ENCODE measurements at regions of chr19 and their contacts with region 1.

Region 1: GRCh38 chr19:50724522-50725217 is 1.5 kb downstream of the CLEC11A start:
- H3K4me3 ChIP-seq: peak overlapping the region; percentile 78
- H3K27ac ChIP-seq: peak overlapping the region; percentile 77
- H3K4me1 ChIP-seq: peaks cover 7% of the 10 kb centered on the region; the same call in 1 of the 2 replicates
- CTCF ChIP-seq: peak; percentile 100

Region 2: GRCh38 chr19:49786376-49786820 is 938.3 kb before region 1 on chr19:
- CTCF ChIA-PET with region 1: no interaction called
- POLR2A ChIA-PET with region 1: no interaction called
- H3K4me3 ChIP-seq: no peak overlapping the region
- H3K27ac ChIP-seq: 0 out of 2 replicates have a peak overlapping the region, but pooled peaks have one; percentile 16
- H3K4me1 ChIP-seq: no peaks in the 10 kb centered on the region
- CTCF ChIP-seq: no peak

Region 3: GRCh38 chr19:50639121-50640112 is 85.3 kb before region 1 on chr19 and contains the start of gene SYT3:
- CTCF ChIA-PET with region 1: no interaction called
- POLR2A ChIA-PET with region 1: interaction called, 11 read pairs
- H3K4me3 ChIP-seq: peak within 1 kb of the TSS; percentile 65
- H3K27ac ChIP-seq: peak within 1 kb of the TSS; percentile 34; the same call in 1 of the 2 replicates
- H3K4me1 ChIP-seq: no peaks in the 10 kb centered on the region
- CTCF ChIP-seq: no peak

Region 4: DNA sequence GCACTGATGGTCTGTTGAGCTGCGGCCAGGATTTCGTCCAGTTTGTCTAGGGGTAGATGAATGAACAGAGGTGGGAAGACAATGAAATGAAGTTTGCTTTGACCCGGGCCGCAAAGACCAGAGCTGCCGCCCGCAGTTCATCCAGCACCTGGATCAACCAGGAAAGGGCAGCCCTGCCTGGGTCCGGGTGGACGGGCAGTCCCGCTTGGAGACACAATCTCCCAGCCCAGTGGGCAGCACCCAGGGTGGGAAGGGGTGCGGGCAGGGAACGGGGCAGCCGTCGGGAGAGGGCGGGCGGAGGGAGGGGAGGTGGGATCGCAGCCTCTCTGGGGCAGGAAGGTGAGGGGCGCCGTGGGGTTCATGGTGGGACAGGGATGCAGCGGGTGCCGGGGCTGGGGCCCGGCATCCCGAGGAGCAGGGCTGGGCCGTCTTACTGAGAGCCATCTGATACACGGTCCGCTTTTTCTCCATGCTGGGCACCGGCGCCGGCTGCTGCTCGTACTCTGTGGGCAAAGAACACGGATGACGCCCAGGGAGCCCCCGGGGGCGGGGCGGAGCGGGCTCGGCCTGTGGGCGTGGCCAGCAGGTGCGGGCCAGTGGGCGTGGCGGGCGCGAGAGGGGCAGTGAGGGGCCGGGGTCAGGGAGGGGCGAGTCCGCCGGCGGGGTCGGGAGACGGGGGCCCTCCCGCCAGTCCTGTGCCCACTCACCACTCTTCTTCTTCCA is 38.2 kb before region 1 on chr19:
- CTCF ChIA-PET with region 1: no interaction called
- POLR2A ChIA-PET with region 1: no interaction called
- H3K4me3 ChIP-seq: no peak overlapping the region
- H3K27ac ChIP-seq: no peak overlapping the region
- H3K4me1 ChIP-seq: no peaks in the 10 kb centered on the region
- CTCF ChIP-seq: no peak

Region 5: DNA sequence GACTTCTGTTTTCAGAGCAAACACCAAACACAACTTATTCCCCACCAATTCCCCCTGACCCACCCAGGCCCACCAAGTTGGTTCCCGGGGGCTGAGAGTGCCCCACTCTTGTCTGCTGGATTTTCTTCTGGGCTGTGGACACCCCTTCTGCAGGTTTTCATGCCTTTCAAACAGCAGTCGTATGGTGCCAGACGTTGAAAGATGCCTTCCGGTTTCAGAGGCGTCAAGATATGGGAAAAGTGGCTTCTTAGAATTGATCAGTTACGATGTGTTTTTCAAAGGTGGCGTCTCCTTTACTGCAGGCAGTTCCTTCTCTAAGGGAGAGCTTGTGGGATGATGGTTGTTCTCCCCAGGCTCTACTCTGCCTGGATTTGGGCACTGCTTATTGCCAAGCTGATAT is 11.2 kb after region 1 on chr19:
- CTCF ChIA-PET with region 1: interaction called, 26 read pairs
- POLR2A ChIA-PET with region 1: interaction called, 12 read pairs
- H3K4me3 ChIP-seq: no peak overlapping the region
- H3K27ac ChIP-seq: no peak overlapping the region
- H3K4me1 ChIP-seq: no peaks in the 10 kb centered on the region
- CTCF ChIP-seq: no peak

Region 6: GRCh38 chr19:50745221-50745620 is 20.6 kb after region 1 on chr19:
- CTCF ChIA-PET with region 1: interaction called, 11 read pairs
- POLR2A ChIA-PET with region 1: interaction called, 3 read pairs
- H3K4me3 ChIP-seq: no peak overlapping the region
- H3K27ac ChIP-seq: no peak overlapping the region
- H3K4me1 ChIP-seq: no peaks in the 10 kb centered on the region
- CTCF ChIP-seq: no peak

Region 7: GRCh38 chr19:50858896-50859295 is 134.2 kb after region 1 on chr19:
- CTCF ChIA-PET with region 1: no interaction called
- POLR2A ChIA-PET with region 1: no interaction called
- H3K4me3 ChIP-seq: no peak overlapping the region
- H3K27ac ChIP-seq: no peak overlapping the region
- H3K4me1 ChIP-seq: no peaks in the 10 kb centered on the region
- CTCF ChIP-seq: no peak

Region 8: DNA sequence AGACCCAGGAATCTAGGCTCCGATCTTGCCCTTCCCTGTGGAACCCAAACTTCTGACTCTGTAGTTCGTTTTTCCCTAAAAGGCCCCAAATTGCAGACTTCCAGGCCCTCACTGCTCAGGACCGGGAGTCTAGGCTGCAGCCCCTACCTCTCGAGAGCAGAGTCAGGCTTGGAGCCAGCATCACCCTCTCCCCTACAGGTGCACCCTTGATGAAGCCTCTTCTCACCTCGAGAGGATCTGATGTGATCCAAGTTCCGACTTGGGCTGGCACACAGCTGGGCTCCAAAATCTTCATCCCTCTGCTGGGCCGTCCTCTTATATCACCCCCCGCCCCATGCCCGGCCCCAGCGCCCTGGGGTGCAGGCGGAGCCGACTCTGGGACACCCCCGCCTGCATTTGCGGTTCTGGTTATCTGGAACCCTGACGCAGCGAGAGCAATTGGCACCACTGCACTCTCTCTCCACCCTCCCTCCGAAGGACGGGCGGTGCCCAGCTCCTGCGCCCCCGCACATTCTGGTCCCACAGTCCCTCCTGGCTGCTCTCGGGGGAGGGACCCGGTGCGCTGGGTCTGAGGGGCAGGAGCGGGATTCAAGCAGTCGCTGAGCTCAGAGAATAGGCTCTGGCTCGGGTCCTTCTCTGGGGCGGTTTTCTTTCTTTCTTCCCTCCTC is 259.1 kb after region 1 on chr19 and contains the start of gene KLK7:
- CTCF ChIA-PET with region 1: no interaction called
- POLR2A ChIA-PET with region 1: no interaction called
- H3K4me3 ChIP-seq: no peak within 1 kb of the TSS
- H3K27ac ChIP-seq: no peak within 1 kb of the TSS
- H3K4me1 ChIP-seq: no peaks in the 10 kb centered on the region
- CTCF ChIP-seq: no peak

Measured in HEK293 (cell line).